Activated naive CD4-positive, alpha-beta T cell treated with anti-CD3 and anti-CD28 coated beads, Interleukin-2, amount 10 ng/mL, durations not matched to agents 7 days and 5 days (primary cell): ENCODE measurements at regions of chr7 and their contacts with region 1.

Region 1: DNA sequence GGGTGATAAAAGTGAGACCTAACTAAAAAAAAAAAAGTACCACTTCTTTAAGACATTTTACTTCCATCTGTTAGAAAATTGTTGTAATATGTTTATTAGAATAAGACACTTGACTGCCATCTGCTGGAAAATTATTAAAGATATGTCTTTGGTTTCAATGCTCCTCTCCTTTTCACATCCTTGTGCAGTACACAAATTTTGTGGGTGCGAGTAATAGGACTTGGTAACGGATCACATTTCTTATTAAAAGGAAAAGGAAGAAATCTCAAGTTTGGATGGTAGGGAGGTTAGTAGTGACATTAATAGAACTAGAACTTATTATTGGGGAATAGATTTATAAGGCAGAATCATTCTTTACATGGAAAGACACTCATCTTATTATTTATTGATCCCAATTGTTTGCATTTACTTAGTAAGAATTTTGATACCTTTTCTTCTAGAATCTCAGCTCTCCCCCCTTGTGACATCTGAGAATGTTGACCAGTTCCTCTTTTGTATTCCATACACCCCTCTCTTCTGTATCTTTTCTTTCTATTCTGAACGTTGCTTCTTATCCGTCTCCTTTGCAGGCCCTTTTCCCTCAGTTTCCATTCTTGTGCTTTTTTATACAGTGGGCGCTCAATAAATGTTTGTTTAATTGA is 43.1 kb upstream of the RPA3 start:
- DNase-seq: no peak
- H3K4me3 Mint-ChIP-seq: peak overlapping the region; percentile 85
- H3K27ac Mint-ChIP-seq: peak overlapping the region; percentile 97
- H3K4me1 Mint-ChIP-seq: peaks cover 39% of the 10 kb centered on the region
- H3K27me3 Mint-ChIP-seq: no peaks in the 10 kb centered on the region

Region 2: DNA sequence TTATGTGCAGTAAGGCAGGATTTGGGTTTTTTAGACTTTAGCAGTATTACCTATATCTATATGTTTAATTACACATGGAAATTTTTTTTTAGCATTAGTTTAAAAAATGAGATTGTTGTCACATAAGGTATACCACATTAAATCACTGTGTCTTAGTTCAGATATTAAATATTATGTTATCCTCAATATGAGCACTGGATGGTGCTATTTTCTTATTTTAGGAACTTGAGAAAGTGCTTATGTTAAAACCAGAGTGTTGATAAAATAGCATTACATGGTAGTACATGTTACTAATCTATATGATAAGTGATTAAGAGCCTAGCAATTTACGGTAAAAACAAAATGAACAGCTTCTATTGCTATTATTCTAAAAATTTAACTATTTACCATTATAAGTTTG is 166.0 kb before region 1 on chr7:
- CTCF ChIA-PET with region 1: interaction called, 10 read pairs
- DNase-seq: no peak
- H3K4me3 Mint-ChIP-seq: no peak overlapping the region
- H3K27ac Mint-ChIP-seq: no peak overlapping the region
- H3K4me1 Mint-ChIP-seq: no peaks in the 10 kb centered on the region
- H3K27me3 Mint-ChIP-seq: no peaks in the 10 kb centered on the region

Region 3: DNA sequence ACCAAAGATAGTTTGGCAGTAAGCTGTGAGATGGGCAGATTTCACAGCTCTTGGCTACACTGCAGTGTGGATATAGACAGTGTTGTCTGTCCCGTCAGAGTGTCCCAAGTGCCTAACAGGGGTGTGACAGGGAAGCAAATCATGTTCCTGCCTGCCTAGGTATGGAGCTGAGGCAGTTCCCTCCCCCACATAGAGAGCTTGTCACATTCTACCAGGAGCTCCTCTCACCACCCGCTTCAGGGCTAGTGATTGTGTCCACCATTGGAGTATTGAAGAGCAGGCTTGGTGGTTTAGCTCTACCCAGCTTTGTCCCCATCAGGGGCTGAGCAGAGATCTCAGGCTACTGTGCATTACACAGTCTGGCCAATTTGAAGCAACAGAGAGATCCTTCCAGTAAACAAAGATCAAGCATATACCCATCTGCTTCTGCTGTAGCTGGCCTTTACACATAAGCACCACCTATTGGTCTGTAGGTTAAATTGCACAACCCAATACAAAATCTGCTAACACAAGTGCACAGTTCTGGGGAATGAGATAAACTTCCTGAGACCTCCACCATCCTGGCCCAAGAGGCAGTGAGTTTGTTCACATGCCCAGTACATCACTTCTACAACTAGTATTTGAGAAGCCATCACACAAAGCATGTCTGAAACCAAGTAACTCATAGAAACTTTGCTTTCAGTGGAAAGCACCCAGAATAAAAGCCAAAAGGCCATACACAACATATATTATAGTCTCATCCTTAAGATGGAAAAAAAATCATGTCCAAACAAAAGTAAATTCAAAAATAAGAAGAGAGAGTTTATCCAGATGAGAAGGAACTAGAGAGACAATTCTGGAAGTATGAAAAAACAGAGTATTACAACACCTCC is 274.4 kb after region 1 on chr7:
- CTCF ChIA-PET with region 1: interaction called, 15 read pairs
- DNase-seq: no peak
- H3K4me3 Mint-ChIP-seq: no peak overlapping the region
- H3K27ac Mint-ChIP-seq: no peak overlapping the region
- H3K4me1 Mint-ChIP-seq: peaks cover 12% of the 10 kb centered on the region
- H3K27me3 Mint-ChIP-seq: no peaks in the 10 kb centered on the region

Region 4: DNA sequence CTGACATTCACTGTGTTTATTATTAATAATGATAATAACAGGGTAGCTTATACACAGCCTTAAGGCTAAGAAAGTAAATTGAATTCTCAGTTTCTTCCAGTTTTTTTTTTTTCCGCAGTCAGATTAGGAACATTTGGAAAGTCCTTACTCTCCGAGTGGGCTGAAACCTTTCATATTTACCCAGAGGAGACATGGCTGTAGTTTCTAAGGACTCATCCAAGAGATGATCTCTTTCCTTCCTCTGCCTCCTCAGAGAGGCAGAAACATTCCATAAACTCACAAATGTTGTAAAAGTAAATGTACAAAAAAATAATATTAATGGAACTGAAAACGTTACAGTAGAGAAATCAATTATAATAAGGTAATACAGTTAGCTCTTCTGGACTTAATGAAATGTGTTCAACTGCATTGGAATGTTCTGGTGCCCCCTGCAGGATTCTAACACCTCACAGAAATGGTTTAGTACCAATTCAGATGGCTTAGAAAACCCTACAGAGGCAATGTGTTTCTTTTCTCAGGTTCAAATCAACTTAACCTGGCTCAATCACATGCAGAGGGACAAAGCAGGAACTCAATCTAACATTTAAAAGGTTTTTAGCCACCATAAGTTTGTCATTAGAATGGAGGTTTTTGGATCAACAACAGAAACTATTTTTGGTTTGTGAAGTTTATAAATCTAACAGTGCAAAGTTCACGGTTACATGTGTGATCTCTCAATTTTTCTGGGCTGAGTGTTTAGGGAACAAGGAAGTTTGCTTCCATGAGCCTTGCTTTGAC is 428.8 kb after region 1 on chr7:
- CTCF ChIA-PET with region 1: interaction called, 10 read pairs
- DNase-seq: peak; percentile 79
- H3K4me3 Mint-ChIP-seq: no peak overlapping the region
- H3K27ac Mint-ChIP-seq: no peak overlapping the region
- H3K4me1 Mint-ChIP-seq: peaks cover 25% of the 10 kb centered on the region
- H3K27me3 Mint-ChIP-seq: peaks cover 2% of the 10 kb centered on the region